Aorta (tissue), 5 donors: ENCODE measurements at regions of chr3 and their contacts with region 1.

Region 1: GRCh38 chr3:146156095-146156494 is 4.9 kb downstream of the PLOD2 start:
- DNase-seq: no peak
- ATAC-seq: no peak
- H3K4me3 ChIP-seq: peak overlapping the region; percentile 22 to 74
- H3K27ac ChIP-seq: peak overlapping the region; percentile 64 to 95
- H3K4me1 ChIP-seq: peaks cover 0 to 2% of the 10 kb centered on the region in 2 donors
- H3K27me3 ChIP-seq: no peaks in the 10 kb centered on the region

Region 2: GRCh38 chr3:146072824-146073223 is 83.3 kb before region 1 on chr3:
- intact Hi-C with region 1: loop called (anchors 10 kb)
- DNase-seq: no peak
- ATAC-seq: no peak
- H3K4me3 ChIP-seq: no peak overlapping the region
- H3K27ac ChIP-seq: no peak overlapping the region
- H3K4me1 ChIP-seq: no peaks in the 10 kb centered on the region
- H3K27me3 ChIP-seq: no peaks in the 10 kb centered on the region

Region 3: GRCh38 chr3:146187334-146187950 is 31.3 kb after region 1 on chr3:
- intact Hi-C with region 1: no loop called
- DNase-seq: no peak
- ATAC-seq: no peak
- H3K4me3 ChIP-seq: no peak overlapping the region
- H3K27ac ChIP-seq: no peak overlapping the region
- H3K4me1 ChIP-seq: no peaks in the 10 kb centered on the region
- H3K27me3 ChIP-seq: no peaks in the 10 kb centered on the region